ENCODE measurements at regions of chr11 and their contacts with region 1.

Region 1: DNA sequence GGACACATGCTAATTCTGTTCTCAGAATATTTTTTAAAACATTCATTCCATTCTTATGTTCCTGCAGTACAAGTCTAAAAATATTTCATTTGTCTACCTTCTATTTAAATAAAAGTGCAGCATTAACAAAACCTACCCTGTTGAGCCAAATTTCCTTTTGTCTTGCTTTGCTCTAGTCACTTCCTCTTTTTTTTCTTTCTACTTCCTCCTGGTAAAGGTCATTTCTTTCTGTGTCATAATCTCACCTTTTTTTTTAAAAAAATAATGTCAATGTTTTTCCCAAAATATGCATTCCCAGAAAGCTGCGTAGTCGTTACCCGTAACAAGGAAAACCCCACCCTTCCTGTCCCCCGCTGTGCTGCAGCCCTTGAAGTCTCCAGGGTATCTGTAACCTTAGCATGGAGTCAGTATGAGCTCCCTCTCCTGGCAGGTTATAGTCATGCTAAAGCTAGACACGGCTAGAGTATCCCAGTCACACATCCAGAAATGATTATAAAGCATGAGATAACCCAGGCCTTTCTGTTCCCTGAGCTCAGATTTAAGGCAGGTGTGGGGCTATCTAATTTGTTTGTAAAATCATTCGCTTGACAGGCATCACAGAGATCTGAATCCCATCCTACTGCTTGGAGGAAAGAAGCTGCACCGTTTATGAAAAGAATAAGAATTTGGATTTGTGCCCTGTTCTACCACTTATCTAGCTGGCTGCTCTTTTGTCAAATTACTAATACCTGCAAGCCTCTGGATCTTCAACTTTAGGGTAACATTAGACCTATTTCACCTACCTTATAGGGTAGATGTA is 51.1 kb upstream of the EED start:
- DNase-seq: peak; percentile 86
- ATAC-seq: peak; percentile 100
- H3K4me3 Mint-ChIP-seq: peak overlapping the region; percentile 70
- H3K27ac Mint-ChIP-seq: peak overlapping the region; percentile 83
- H3K4me1 Mint-ChIP-seq: peaks cover 18% of the 10 kb centered on the region
- H3K27me3 Mint-ChIP-seq: no peaks in the 10 kb centered on the region

Region 2: DNA sequence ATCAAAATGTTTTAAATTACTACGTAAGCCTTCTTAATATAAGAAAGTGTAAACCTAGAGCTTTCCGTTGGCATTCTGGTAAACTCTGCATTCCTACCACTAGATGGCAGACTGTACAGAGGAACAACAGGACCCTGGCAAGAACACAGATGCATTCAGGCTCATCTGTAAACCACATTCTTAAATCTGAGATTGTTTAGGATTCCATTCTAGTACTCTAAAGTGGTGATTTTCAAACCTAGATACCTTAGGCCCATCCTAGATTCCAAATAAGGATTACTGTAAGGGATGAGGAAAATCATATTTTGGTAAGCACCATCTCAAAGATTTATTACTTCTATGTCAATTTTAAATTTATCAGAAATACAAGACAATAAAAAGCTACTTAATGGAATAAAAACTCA is 151.5 kb before region 1 on chr11:
- CTCF ChIA-PET with region 1: interaction called, 61 read pairs
- DNase-seq: peak; percentile 67
- ATAC-seq: peak; percentile 82
- H3K4me3 Mint-ChIP-seq: no peak overlapping the region
- H3K27ac Mint-ChIP-seq: peak overlapping the region; percentile 45
- H3K4me1 Mint-ChIP-seq: peaks cover 66% of the 10 kb centered on the region
- H3K27me3 Mint-ChIP-seq: no peaks in the 10 kb centered on the region

Region 3: GRCh38 chr11:86138958-86139357 is 54.5 kb before region 1 on chr11:
- CTCF ChIA-PET with region 1: interaction called, 10 read pairs
- DNase-seq: peak; percentile 80
- ATAC-seq: peak; percentile 75
- H3K4me3 Mint-ChIP-seq: peak overlapping the region; percentile 34
- H3K27ac Mint-ChIP-seq: peak overlapping the region; percentile 89
- H3K4me1 Mint-ChIP-seq: peaks cover 64% of the 10 kb centered on the region
- H3K27me3 Mint-ChIP-seq: no peaks in the 10 kb centered on the region

Region 4: GRCh38 chr11:86174101-86175046 is 19.1 kb before region 1 on chr11:
- CTCF ChIA-PET with region 1: interaction called, 14 read pairs
- DNase-seq: no peak
- ATAC-seq: no peak
- H3K4me3 Mint-ChIP-seq: no peak overlapping the region
- H3K27ac Mint-ChIP-seq: no peak overlapping the region
- H3K4me1 Mint-ChIP-seq: peaks cover 30% of the 10 kb centered on the region
- H3K27me3 Mint-ChIP-seq: no peaks in the 10 kb centered on the region

Region 5: DNA sequence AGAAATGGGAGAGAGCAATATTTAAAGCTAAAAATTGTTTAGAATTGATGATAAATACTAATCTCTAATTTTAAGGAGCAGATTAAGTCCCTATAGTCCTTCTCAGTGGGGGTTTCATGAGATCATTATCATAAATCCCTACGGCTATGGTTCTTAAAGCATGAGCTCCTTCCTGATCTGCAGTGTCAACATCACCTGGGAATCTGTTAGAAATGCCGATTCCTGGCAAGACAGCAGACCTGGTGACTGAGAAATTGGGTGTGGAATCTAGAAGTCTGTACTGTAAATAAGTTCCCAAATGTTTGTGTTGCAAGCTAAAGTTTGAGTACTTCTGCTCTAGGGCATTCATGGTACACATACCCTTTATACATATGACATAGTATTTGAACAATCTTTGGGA is 121.2 kb after region 1 on chr11:
- CTCF ChIA-PET with region 1: no interaction called
- DNase-seq: no peak
- ATAC-seq: no peak
- H3K4me3 Mint-ChIP-seq: no peak overlapping the region
- H3K27ac Mint-ChIP-seq: no peak overlapping the region
- H3K4me1 Mint-ChIP-seq: peaks cover 6% of the 10 kb centered on the region
- H3K27me3 Mint-ChIP-seq: no peaks in the 10 kb centered on the region

Measured in activated CD8-positive, alpha-beta memory T cell treated with anti-CD3 and anti-CD28 coated beads, Interleukin-2, amount 10 ng/mL, durations not matched to agents 7 days and 5 days (primary cell).